Activated CD8-positive, alpha-beta T cell treated with anti-CD3 and anti-CD28 coated beads, Interleukin-2, amount 10 ng/mL, durations not matched to agents 7 days and 5 days (primary cell): ENCODE measurements at regions of chr6 and their contacts with region 1.

Region 1: GRCh38 chr6:3977875-3978711 is 100.8 kb downstream of the FAM217A start:
- DNase-seq: peak; percentile 68
- ATAC-seq: peak; percentile 99
- H3K4me3 Mint-ChIP-seq: no peak overlapping the region
- H3K27ac Mint-ChIP-seq: no peak overlapping the region
- H3K4me1 Mint-ChIP-seq: peaks cover 7% of the 10 kb centered on the region
- H3K27me3 Mint-ChIP-seq: peaks cover 18% of the 10 kb centered on the region

Region 2: DNA sequence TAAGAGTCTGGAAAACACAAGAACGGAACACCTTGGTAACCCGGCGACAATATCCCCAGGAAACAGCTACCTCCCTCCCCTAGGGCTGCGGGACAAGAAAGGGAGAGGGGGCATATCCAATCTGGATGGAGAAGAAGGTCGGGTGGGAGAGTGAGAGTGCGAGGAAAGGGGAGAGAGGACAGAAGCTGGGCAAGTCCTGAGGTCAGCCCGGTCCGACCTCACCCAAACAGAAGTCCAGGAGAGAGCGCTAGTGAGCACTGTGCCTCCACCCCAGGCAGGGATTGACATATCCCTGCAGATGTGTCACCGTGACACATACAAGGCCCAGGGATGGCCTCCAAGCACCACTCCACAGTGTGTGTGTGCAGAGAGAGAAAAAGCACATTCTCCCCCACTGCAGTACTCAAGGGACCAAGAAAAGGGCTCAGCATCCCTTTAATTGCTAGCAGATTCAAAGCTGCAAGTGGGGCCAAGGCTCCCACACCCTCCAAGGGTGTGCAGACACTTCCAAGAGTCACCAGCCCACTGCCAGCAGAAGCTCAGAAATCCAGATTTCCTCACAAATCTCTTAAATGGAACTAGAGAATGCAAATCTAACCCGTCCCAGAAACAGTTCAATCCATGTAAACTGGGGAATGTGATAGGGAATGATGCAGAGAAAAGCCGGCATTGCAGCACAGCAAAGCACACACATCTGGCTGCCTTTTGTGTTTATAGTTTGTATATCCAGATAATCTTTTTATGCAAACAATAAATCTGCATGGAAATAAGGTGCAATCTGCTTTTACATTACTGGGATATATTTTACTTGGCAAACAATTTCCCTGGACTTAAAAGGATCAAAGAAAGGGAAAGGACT is 229.7 kb before region 1 on chr6:
- CTCF ChIA-PET with region 1: interaction called, 66 read pairs
- POLR2A ChIA-PET with region 1: no interaction called
- DNase-seq: peak; percentile 46
- ATAC-seq: no peak
- H3K4me3 Mint-ChIP-seq: no peak overlapping the region
- H3K27ac Mint-ChIP-seq: no peak overlapping the region
- H3K4me1 Mint-ChIP-seq: no peaks in the 10 kb centered on the region
- H3K27me3 Mint-ChIP-seq: peaks cover 42% of the 10 kb centered on the region

Region 3: DNA sequence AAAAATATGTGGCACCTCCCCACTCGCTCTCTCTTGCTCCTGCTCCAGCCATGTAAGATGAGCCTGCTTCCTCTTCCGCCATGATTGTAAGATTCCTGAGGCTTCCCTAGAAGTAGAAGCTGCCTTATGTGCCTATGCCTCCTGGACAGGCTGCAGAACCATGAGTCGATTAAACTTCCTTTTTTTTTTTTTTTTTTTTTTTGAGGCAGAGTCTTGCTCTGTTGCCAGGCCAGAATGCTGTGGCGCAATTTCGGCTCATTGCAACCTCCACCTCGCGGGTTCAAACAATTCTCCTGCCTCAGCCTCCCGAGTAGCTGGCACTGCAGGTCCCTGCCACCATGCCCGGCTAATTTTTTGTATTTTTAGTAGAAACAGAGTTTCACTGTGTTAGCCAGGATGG is 11.7 kb before region 1 on chr6:
- CTCF ChIA-PET with region 1: interaction called, 25 read pairs
- POLR2A ChIA-PET with region 1: no interaction called
- DNase-seq: no peak
- ATAC-seq: no peak
- H3K4me3 Mint-ChIP-seq: no peak overlapping the region
- H3K27ac Mint-ChIP-seq: no peak overlapping the region
- H3K4me1 Mint-ChIP-seq: no peaks in the 10 kb centered on the region
- H3K27me3 Mint-ChIP-seq: no peaks in the 10 kb centered on the region

Region 4: DNA sequence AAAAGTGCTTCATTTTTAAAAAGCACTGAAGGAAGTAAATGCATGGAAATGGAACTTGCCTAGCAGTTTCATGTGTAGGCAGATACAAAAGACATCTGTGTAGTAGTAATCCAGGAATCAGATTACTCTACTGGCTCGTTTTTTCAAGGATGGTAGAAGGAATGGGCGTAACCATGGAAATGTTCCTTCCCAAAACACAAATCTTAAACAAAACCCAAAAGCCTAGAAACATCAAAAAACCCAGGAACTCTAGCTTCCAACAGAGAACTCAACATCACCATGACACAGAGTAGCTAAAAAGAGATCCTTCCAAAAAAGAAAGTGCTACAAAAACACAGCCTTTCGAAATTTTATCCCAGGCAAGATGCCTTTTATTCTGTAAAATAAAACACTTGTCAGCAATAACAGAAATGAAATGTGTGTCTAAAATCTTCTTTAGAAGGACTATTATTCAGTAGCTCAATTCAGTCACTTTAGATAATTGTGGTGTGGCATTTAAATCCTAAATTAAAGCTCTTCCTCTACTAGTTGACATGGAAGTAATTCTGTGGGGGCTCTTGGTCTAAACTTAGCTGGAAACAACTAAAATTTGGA is 19.2 kb after region 1 on chr6:
- CTCF ChIA-PET with region 1: interaction called, 30 read pairs
- POLR2A ChIA-PET with region 1: no interaction called
- DNase-seq: no peak
- ATAC-seq: no peak
- H3K4me3 Mint-ChIP-seq: no peak overlapping the region
- H3K27ac Mint-ChIP-seq: no peak overlapping the region
- H3K4me1 Mint-ChIP-seq: no peaks in the 10 kb centered on the region
- H3K27me3 Mint-ChIP-seq: no peaks in the 10 kb centered on the region

Region 5: DNA sequence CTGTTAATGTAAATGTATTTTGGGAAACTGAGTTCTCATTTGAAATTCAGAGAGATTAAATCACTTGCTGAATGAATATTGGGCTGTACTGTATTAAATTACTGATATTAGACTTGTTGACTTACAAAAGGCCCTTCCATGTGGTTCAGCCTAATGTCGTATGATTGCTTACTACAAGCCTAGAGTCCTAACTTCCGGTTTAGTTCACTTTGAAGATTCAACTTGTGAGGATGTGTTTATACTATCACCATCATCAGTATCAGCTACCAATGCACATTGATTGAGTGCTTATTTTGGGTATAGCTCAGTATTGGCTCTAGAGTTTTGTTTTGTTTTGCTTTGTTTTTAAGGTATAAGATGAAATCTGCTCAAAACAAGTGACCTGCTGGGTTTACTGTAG is 52.6 kb after region 1 on chr6:
- CTCF ChIA-PET with region 1: no interaction called
- POLR2A ChIA-PET with region 1: no interaction called
- DNase-seq: no peak
- ATAC-seq: peak; percentile 61
- H3K4me3 Mint-ChIP-seq: no peak overlapping the region
- H3K27ac Mint-ChIP-seq: peak overlapping the region; percentile 18
- H3K4me1 Mint-ChIP-seq: peaks cover 65% of the 10 kb centered on the region
- H3K27me3 Mint-ChIP-seq: no peaks in the 10 kb centered on the region

Region 6: GRCh38 chr6:4049246-4049645 is 71.2 kb after region 1 on chr6:
- CTCF ChIA-PET with region 1: no interaction called
- POLR2A ChIA-PET with region 1: no interaction called
- DNase-seq: no peak
- ATAC-seq: no peak
- H3K4me3 Mint-ChIP-seq: no peak overlapping the region
- H3K27ac Mint-ChIP-seq: no peak overlapping the region
- H3K4me1 Mint-ChIP-seq: no peaks in the 10 kb centered on the region
- H3K27me3 Mint-ChIP-seq: no peaks in the 10 kb centered on the region

Region 7: DNA sequence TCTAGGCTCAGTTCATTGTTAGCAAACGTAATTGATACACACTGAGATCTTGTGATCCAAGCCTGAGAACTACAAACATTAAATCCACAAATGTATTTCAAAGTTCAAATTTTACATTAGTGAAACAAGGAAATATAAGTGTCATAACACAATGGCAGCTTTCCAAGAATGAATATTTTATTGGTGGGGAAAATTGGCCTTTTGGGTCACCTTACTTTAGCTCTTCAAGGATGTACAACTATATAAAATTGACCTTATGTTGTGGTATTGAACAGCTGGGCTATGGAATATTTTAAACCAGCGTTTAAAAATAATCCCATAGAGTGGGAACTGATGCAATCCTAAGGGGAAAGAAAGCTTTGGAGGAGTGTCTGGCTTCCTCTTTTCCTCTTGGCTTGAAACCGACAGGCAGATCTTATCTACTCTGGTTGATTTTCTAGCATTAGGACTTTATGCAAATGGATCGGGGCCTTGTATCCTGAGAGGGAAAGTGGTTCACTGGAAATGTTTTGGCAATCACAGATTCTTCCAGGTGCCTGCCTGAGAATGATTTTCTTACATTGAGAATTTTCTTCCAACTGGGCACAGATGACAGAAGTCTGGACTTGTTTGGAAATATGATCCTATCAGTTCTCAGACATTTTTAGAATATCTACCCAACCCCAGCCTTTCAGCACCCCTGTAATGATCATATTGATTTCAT is 342.0 kb after region 1 on chr6:
- CTCF ChIA-PET with region 1: no interaction called
- POLR2A ChIA-PET with region 1: no interaction called
- DNase-seq: no peak
- ATAC-seq: no peak
- H3K4me3 Mint-ChIP-seq: no peak overlapping the region
- H3K27ac Mint-ChIP-seq: no peak overlapping the region
- H3K4me1 Mint-ChIP-seq: no peaks in the 10 kb centered on the region
- H3K27me3 Mint-ChIP-seq: peaks cover 2% of the 10 kb centered on the region

Region 8: GRCh38 chr6:4801491-4802110 is 823.5 kb after region 1 on chr6:
- CTCF ChIA-PET with region 1: no interaction called
- POLR2A ChIA-PET with region 1: no interaction called
- DNase-seq: no peak
- ATAC-seq: peak; percentile 47
- H3K4me3 Mint-ChIP-seq: no peak overlapping the region
- H3K27ac Mint-ChIP-seq: no peak overlapping the region
- H3K4me1 Mint-ChIP-seq: peaks cover 38% of the 10 kb centered on the region
- H3K27me3 Mint-ChIP-seq: no peaks in the 10 kb centered on the region